ENCODE measurements at regions of chr15 and their contacts with region 1.

Region 1: GRCh38 chr15:55993111-55993803 is at the start of gene NEDD4:
- DNase-seq: peak; percentile 91 to 93 (median 92)
- ATAC-seq: peak; percentile 94 to 98 (median 97)
- H3K4me3 ChIP-seq: peak within 1 kb of the TSS; percentile 63 to 96 (median 84)
- H3K27ac ChIP-seq: peak within 1 kb of the TSS; percentile 86 to 98 (median 94)
- H3K4me1 ChIP-seq: peaks cover 0 to 33% (median 11%) of the 10 kb centered on the region in 12 donors
- H3K27me3 ChIP-seq: no peaks in the 10 kb centered on the region
- CTCF ChIP-seq: peak; percentile 28 to 75 (median 54)
- POLR2A ChIP-seq: peak in 1 of 2 donors; percentile 64
- total RNA-seq, gene NEDD4: 6.0 to 14.8 (median 9.2) TPM

Region 2: GRCh38 chr15:55897560-55898336 is 95.5 kb before region 1 on chr15:
- intact Hi-C with region 1: loop called in 3 of 10 experiments (anchors 5 to 10 kb)
- DNase-seq: peak in 3 of 5 donors; percentile 46 to 57 (median 47)
- ATAC-seq: peak; percentile 81 to 94 (median 88)
- H3K4me3 ChIP-seq: peak overlapping the region in 1 of 12 donors; percentile 0
- H3K27ac ChIP-seq: peak overlapping the region; percentile 50 to 82 (median 74)
- H3K4me1 ChIP-seq: peaks cover 0 to 28% (median 15%) of the 10 kb centered on the region in 12 donors
- H3K27me3 ChIP-seq: no peaks in the 10 kb centered on the region
- CTCF ChIP-seq: peak; percentile 69 to 89 (median 82)
- POLR2A ChIP-seq: no peak

Region 3: GRCh38 chr15:55937040-55937439 is 56.2 kb before region 1 on chr15:
- intact Hi-C with region 1: no loop called
- DNase-seq: no peak
- ATAC-seq: no peak
- H3K4me3 ChIP-seq: no peak overlapping the region
- H3K27ac ChIP-seq: no peak overlapping the region
- H3K4me1 ChIP-seq: peaks cover 0 to 2% (median 0%) of the 10 kb centered on the region in 12 donors
- H3K27me3 ChIP-seq: no peaks in the 10 kb centered on the region
- CTCF ChIP-seq: no peak
- POLR2A ChIP-seq: no peak

Region 4: DNA sequence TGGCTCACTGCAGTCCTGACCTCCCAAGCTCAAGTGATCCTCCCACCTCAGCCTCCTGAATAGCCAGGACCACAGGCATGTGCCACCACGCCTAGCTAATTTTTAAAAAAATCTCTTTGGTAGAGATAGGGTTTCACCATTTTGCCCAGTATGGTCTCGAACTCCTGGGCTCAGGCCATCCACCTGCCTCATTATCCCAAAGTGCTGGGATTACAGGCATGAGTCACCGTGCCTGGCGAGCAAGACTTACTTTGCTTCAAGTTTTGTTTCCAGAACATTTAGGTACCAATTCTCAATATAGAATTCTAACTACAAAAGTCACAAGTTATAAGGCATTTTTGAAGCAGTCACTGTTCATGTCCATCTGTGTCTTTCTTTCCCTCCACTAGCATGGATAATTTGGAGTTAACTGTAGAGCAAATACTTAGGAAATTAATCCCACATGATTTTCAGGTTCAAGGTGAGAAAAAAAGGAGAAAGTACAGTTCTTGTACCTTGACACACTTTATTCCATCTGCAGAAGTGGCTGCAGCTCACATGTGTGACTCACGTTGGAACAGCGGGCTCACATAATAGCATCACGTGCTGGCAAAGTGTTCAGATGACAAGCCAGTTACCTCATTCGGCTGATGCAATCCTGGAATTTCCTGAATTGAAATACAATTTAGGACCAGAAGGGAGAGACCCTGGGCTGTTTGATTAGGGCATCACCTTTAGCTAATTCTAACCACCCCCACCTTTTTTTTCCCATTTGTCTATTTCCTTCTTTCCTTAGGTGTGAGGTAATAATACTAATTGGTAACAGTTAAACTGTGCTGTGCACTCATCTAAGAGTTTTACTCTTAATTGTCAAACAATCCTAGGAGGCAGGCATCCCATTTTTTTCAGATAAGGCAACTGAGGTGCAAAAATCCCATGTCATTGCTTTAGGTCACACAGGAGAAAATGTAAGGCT is 47.1 kb after region 1 on chr15:
- intact Hi-C with region 1: loop called in 2 of 10 experiments (anchors 5 to 10 kb)
- DNase-seq: peak in 4 of 5 donors; percentile 29 to 56 (median 48)
- ATAC-seq: peak; percentile 77 to 91 (median 78)
- H3K4me3 ChIP-seq: no peak overlapping the region
- H3K27ac ChIP-seq: peak overlapping the region in 5 of 12 donors; percentile 2 to 57 (median 42)
- H3K4me1 ChIP-seq: peaks cover 0 to 17% (median 7%) of the 10 kb centered on the region in 12 donors
- H3K27me3 ChIP-seq: no peaks in the 10 kb centered on the region
- CTCF ChIP-seq: no peak
- POLR2A ChIP-seq: peak in 1 of 2 donors; percentile 20

Region 5: DNA sequence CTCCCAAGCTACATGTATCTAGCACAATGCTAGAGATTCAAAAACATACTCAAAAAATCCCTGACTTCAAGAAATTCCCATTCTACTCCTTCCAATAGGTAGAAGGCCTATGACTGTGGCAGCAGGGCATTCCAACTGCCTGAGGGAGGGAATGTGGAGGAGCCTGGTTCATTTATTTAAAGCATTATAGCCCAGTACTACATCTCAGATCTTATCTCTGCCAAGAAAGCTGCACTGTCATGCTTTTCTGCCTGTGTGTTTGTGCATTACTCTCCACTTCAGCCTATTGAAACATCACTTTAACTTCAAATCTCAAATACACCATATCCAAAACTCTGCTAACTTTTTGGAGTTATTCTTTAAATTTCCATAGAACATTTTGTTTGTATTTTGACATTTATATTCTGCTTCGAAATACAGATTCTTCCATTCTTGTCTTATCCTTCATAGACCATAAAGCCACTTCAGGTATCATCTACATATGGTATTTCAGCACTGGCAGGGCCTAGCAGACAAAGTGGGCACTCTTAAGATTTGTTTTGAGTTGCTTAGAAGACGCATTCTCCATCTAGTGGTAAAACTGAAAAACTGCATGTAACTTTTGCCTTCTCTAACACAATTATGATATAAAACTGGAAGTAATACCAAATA is 59.3 kb after region 1 on chr15:
- intact Hi-C with region 1: loop called in 4 of 10 experiments (anchors 2 to 10 kb)
- DNase-seq: no peak
- ATAC-seq: peak in 1 of 4 donors; percentile 31
- H3K4me3 ChIP-seq: no peak overlapping the region
- H3K27ac ChIP-seq: no peak overlapping the region
- H3K4me1 ChIP-seq: no peaks in the 10 kb centered on the region
- H3K27me3 ChIP-seq: no peaks in the 10 kb centered on the region
- CTCF ChIP-seq: peak; percentile 61 to 83 (median 76)
- POLR2A ChIP-seq: no peak

Region 6: GRCh38 chr15:56245871-56246814 is 252.9 kb after region 1 on chr15:
- intact Hi-C with region 1: loop called in 6 of 10 experiments (anchors 2 to 10 kb)
- DNase-seq: peak; percentile 87 to 94 (median 90)
- ATAC-seq: peak; percentile 72 to 86 (median 83)
- H3K4me3 ChIP-seq: peak overlapping the region in 10 of 12 donors; percentile 7 to 79 (median 45)
- H3K27ac ChIP-seq: peak overlapping the region in 11 of 12 donors; percentile 1 to 94 (median 48)
- H3K4me1 ChIP-seq: peaks cover 0 to 34% (median 23%) of the 10 kb centered on the region in 12 donors
- H3K27me3 ChIP-seq: no peaks in the 10 kb centered on the region
- CTCF ChIP-seq: peak; percentile 98 to 100 (median 100)
- POLR2A ChIP-seq: no peak

Measured in heart left ventricle (tissue), 16 donors.